ENCODE measurements at regions of chr5 and their contacts with region 1.

Region 1: GRCh38 chr5:149181732-149182131 is 40.4 kb downstream of the ABLIM3 start:
- DNase-seq: no peak
- ATAC-seq: no peak
- H3K4me3 ChIP-seq: no peak overlapping the region
- H3K27ac ChIP-seq: peak overlapping the region in 1 of 10 donors; percentile 12
- H3K4me1 ChIP-seq: peaks cover 0 to 68% (median 32%) of the 10 kb centered on the region in 9 donors
- H3K27me3 ChIP-seq: no peaks in the 10 kb centered on the region
- CTCF ChIP-seq: no peak

Region 2: DNA sequence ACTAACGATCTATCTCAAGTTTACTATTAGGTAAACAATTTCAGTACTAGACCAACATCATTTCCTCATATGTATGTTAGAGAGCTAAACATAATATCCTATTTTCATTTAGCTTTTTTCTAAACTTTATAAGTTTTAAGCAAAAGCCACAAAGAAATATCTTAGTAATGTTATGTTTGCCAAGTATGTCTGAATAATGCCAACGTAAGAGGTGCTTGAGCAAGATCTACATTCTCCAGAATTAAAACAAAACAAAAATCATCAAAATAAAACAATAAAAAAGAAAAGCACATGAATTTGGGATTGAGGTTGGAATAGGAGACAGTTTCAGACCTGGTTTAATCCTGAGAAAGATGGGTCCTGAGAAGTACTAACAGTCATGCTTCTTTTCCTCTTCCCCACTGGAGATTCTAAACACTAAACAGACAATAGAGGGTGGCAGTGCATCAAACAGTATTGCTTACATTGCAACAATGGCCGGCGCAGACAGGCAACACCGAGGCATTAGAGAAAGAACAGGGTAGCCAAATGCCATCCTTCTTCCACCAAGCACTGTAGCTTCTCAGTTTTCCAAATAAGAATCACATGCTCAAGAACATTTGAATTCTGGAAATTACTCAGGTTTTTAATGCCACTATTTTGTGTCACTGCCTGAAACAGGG is 335.9 kb after region 1 on chr5:
- intact Hi-C with region 1: loop called in 1 of 10 experiments (anchors 5 kb)
- DNase-seq: no peak
- ATAC-seq: peak in 7 of 8 donors; percentile 38 to 73 (median 60)
- H3K4me3 ChIP-seq: peak overlapping the region in 2 of 10 donors; percentile 5 to 18
- H3K27ac ChIP-seq: peak overlapping the region in 5 of 10 donors; percentile 2 to 54 (median 21)
- H3K4me1 ChIP-seq: peaks cover 0 to 100% (median 94%) of the 10 kb centered on the region in 9 donors
- H3K27me3 ChIP-seq: no peaks in the 10 kb centered on the region
- CTCF ChIP-seq: peak in 4 of 9 donors; percentile 11 to 43 (median 32)

Measured in heart right ventricle (tissue), 16 donors.